GM10248 (cell line): ENCODE measurements at regions of chr11 and their contacts with region 1.

Region 1: GRCh38 chr11:78645226-78646202 is 70.8 kb upstream of the NARS2 start:
- DNase-seq: peak; percentile 71
- CTCF ChIP-seq: peak; percentile 95

Region 2: DNA sequence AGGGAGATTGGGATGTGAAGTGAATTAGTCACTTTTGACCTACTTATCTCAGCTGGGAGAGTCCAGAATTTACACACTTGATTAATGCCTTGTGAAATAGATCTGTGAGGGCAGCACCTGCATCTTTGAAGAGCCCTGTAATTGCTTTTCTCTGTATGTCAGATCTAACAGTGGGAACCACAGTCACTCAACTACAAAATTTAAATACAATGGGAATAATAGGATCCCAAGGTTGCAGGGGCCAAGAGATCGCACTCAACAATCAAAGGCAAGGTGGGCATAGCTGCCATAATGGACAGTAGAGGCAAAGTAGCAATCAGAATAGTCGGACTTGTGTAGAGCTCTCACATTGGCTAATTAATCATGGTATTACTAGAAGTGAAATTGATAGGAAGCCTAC is 25.4 kb before region 1 on chr11:
- CTCF ChIA-PET with region 1: no interaction called
- POLR2A ChIA-PET with region 1: no interaction called
- DNase-seq: no peak
- CTCF ChIP-seq: no peak

Region 3: GRCh38 chr11:78676026-78676557 is 30.6 kb after region 1 on chr11:
- CTCF ChIA-PET with region 1: interaction called, 19 read pairs
- POLR2A ChIA-PET with region 1: no interaction called
- DNase-seq: no peak
- CTCF ChIP-seq: no peak

Region 4: GRCh38 chr11:78715639-78716311 is 70.3 kb after region 1 on chr11:
- CTCF ChIA-PET with region 1: interaction called, 149 read pairs
- POLR2A ChIA-PET with region 1: no interaction called
- DNase-seq: peak; percentile 56
- CTCF ChIP-seq: peak; percentile 87

Region 5: GRCh38 chr11:79076526-79077115 is 431.1 kb after region 1 on chr11:
- CTCF ChIA-PET with region 1: interaction called, 28 read pairs
- POLR2A ChIA-PET with region 1: no interaction called
- DNase-seq: no peak
- CTCF ChIP-seq: peak; percentile 46

Region 6: DNA sequence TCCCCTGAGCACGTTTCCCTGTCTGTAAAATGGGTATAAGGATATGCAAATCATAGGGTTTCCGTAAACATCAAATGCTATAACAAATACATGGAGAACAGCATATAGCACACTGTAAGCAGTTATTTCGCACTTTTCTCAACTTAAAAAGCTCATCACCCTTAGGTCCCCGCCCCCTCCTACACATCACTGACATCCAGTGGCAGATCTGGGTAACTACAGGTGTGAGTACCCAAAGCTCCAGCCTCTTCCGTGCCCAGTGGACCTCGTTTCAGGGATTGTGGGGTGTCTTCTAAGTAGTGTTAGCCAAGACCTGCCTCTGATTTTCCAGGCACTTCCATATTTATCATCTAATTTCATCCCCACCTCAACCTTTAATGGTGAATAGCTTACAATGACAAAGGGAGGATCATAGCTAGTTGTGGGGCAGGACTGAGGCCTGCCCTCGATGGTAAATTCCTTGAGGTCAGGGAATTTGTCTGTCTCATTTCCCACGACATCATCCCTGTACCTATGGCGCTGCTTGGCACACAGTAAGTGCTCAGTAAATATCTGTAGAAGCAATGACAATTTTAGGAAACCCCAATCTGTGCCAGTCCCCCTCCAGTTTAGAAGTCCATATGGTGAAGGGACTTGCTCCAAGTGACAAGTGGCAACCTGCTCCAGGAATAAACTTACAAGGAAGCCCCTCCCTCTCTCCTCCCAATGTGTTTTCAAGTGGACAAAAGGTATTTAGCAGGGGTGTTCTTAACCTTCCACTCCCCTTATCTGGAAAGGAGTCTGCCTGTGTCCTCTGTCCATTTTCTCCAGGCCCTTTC is 454.8 kb after region 1 on chr11:
- CTCF ChIA-PET with region 1: interaction called, 98 read pairs
- POLR2A ChIA-PET with region 1: no interaction called
- DNase-seq: peak; percentile 73
- CTCF ChIP-seq: peak; percentile 63